Prostate gland (tissue), 2 donors: ENCODE measurements at regions of chr2 and their contacts with region 1.

Region 1: DNA sequence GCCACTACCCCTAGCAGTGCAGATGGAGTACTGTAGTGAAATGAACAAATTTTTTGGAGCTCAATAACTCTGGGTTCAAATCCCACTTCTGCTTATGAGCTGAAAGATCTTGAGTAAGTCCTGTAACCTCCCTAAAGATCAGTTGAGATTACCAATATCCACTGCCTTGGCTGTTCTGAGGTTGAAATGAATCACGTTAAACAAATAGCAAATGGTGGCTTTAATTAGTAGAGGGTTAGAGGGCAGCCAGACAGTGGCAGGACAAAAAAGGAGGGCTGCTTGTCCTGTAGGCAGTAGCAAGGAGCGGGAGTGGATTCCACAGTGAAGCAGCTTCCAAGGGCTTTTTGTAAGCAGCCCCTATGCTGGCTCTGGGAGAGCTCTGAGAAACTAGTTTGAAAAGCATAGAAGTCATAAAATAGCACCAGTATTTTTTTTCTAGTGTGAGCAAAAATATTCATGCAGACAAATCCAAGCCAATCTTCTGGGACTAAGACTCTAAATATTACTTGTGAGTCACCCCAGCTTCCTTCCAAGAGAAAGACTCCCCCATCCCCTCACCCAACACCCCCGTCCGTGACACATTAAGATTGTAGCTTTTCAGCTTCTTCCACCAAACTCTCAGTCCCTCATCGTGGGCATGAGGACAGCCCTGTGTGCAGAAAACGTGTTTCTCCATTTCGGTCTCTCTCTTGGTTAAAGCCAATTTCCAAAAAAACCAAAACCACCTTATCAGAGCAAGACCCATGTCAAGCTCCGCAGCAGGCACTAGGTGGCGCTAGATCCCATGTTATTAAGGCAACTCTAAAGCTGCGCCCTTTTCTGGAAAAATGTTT is 123.5 kb upstream of the LGALSL start:
- DNase-seq: peak; percentile 64
- H3K4me3 ChIP-seq: no peak overlapping the region
- H3K27ac ChIP-seq: peak overlapping the region in 1 of 2 donors; percentile 63
- H3K4me1 ChIP-seq: peaks cover 5% of the 10 kb centered on the region
- H3K27me3 ChIP-seq: no peaks in the 10 kb centered on the region
- CTCF ChIP-seq: peak; percentile 59 to 96 (median 94)
- POLR2A ChIP-seq: no peak

Region 2: GRCh38 chr2:64052468-64053241 is 277.8 kb before region 1 on chr2:
- intact Hi-C with region 1: loop called (anchors 2 kb)
- DNase-seq: no peak
- H3K4me3 ChIP-seq: no peak overlapping the region
- H3K27ac ChIP-seq: no peak overlapping the region
- H3K4me1 ChIP-seq: no peaks in the 10 kb centered on the region
- H3K27me3 ChIP-seq: no peaks in the 10 kb centered on the region
- CTCF ChIP-seq: no peak
- POLR2A ChIP-seq: no peak

Region 3: GRCh38 chr2:64080179-64080578 is 250.3 kb before region 1 on chr2:
- intact Hi-C with region 1: no loop called
- DNase-seq: no peak
- H3K4me3 ChIP-seq: no peak overlapping the region
- H3K27ac ChIP-seq: no peak overlapping the region
- H3K4me1 ChIP-seq: no peaks in the 10 kb centered on the region
- H3K27me3 ChIP-seq: no peaks in the 10 kb centered on the region
- CTCF ChIP-seq: no peak
- POLR2A ChIP-seq: no peak

Region 4: DNA sequence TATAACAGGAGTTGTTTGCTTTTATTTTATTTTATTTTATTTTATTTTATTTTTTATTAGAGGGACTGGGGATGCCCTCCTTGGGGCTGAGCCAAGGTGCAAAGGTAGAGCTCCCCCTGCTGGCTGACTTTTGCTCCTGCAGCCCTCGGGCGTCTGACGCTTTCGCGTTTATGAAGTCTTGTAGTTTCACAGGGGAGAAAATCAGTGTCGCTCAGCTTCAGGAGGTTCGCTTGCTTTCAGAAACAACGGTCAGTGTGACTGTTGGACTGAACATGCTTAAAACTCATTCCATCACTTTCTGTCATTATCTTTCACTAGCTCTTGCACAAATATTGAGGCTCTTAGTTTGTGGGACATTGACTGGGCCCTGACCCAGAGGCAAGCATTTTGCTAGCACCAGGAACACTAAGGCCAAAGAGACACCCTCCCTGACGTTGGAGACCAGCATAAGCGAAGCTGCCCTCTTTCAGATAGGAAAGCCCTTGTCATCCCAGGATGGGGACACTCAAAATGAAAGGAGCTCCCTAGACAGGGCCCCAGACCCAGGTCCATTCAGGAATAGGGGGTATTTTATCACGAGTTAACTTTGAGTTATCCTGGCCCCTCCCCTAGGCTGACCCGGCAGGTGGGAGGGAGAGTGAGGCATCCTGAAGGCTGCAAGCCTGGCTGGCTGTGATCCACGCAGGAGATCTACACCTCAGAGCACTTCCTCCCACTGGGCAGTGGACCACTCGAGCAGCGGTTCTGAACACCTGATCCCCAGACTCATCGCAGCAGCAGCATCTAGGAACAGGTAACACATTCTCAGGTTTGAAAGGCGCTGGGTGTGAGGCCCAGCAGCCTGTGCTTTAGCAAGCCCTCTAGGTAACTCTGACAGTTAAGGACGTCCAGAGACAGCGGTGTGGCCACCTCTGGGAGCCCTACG is 157.8 kb after region 1 on chr2:
- intact Hi-C with region 1: loop called (anchors 1 kb)
- DNase-seq: peak; percentile 42
- H3K4me3 ChIP-seq: no peak overlapping the region
- H3K27ac ChIP-seq: peak overlapping the region; percentile 9 to 54
- H3K4me1 ChIP-seq: no peaks in the 10 kb centered on the region
- H3K27me3 ChIP-seq: no peaks in the 10 kb centered on the region
- CTCF ChIP-seq: peak; percentile 86 to 95 (median 90)
- POLR2A ChIP-seq: no peak

Region 5: GRCh38 chr2:64562148-64562784 is 231.8 kb after region 1 on chr2:
- intact Hi-C with region 1: loop called (anchors 5 kb)
- DNase-seq: no peak
- H3K4me3 ChIP-seq: no peak overlapping the region
- H3K27ac ChIP-seq: no peak overlapping the region
- H3K4me1 ChIP-seq: no peaks in the 10 kb centered on the region
- H3K27me3 ChIP-seq: no peaks in the 10 kb centered on the region
- CTCF ChIP-seq: peak in 3 of 4 experiments; percentile 3 to 44 (median 43)
- POLR2A ChIP-seq: no peak